Naive thymus-derived CD4-positive, alpha-beta T cell (primary cell): ENCODE measurements at regions of chr12 and their contacts with region 1.

Region 1: DNA sequence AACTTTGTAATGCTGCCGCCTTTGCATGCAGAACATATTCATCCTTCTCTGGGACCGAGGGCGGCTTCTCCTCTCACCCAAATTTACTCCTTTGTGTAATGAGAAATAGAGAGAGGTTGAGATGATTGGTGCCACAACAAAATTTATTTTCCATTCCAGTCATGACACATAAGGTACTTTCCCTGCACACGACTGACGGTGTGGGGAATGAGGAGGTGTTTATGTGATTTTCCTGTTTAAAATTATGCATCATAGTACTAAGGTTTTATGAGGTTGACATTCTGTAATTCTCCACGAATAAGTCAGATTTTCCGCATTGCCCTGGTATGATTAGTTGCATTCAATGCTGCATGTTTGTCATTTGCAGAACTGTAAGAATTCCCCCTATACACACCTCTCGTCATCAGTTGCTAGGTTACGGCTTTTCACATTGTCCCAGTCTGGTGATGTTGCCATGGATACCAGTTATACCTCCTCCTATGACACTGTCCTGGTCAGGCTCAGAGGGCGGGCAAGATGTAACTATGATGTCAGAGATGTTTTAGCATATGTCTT is 23.1 kb downstream of the BICDL1 start:
- DNase-seq: peak in 8 of 9 donors; percentile 31 to 98 (median 74)
- ATAC-seq: peak; percentile 78
- H3K4me3 ChIP-seq: peak overlapping the region; percentile 33
- H3K4me3 Mint-ChIP-seq: peak overlapping the region; percentile 8 to 86 (median 74)
- H3K27ac ChIP-seq: peak overlapping the region; percentile 93
- H3K27ac Mint-ChIP-seq: peak overlapping the region; percentile 93 to 100 (median 96)
- H3K4me1 ChIP-seq: peaks cover 73 to 79% of the 10 kb centered on the region in 2 donors
- H3K4me1 Mint-ChIP-seq: peaks cover 41 to 94% (median 82%) of the 10 kb centered on the region in 7 donors
- H3K27me3 ChIP-seq: no peaks in the 10 kb centered on the region
- H3K27me3 Mint-ChIP-seq: no peaks in the 10 kb centered on the region

Region 2: GRCh38 chr12:119835068-119835467 is 177.1 kb before region 1 on chr12:
- CTCF ChIA-PET with region 1: no interaction called
- POLR2A ChIA-PET with region 1: no interaction called
- intact Hi-C with region 1: no loop called
- DNase-seq: no peak
- ATAC-seq: no peak
- H3K4me3 ChIP-seq: no peak overlapping the region
- H3K4me3 Mint-ChIP-seq: no peak overlapping the region
- H3K27ac ChIP-seq: no peak overlapping the region
- H3K27ac Mint-ChIP-seq: no peak overlapping the region
- H3K4me1 ChIP-seq: no peaks in the 10 kb centered on the region
- H3K4me1 Mint-ChIP-seq: no peaks in the 10 kb centered on the region
- H3K27me3 ChIP-seq: no peaks in the 10 kb centered on the region
- H3K27me3 Mint-ChIP-seq: no peaks in the 10 kb centered on the region

Region 3: GRCh38 chr12:119902084-119902509 is 110.0 kb before region 1 on chr12:
- CTCF ChIA-PET with region 1: no interaction called
- POLR2A ChIA-PET with region 1: no interaction called
- intact Hi-C with region 1: loop called in 1 of 2 experiments (anchors 1 kb)
- DNase-seq: peak; percentile 19 to 69 (median 61)
- ATAC-seq: peak; percentile 98
- H3K4me3 ChIP-seq: no peak overlapping the region
- H3K4me3 Mint-ChIP-seq: no peak overlapping the region
- H3K27ac ChIP-seq: no peak overlapping the region
- H3K27ac Mint-ChIP-seq: no peak overlapping the region
- H3K4me1 ChIP-seq: no peaks in the 10 kb centered on the region
- H3K4me1 Mint-ChIP-seq: peaks cover 0 to 8% (median 6%) of the 10 kb centered on the region in 7 donors
- H3K27me3 ChIP-seq: no peaks in the 10 kb centered on the region
- H3K27me3 Mint-ChIP-seq: peaks cover 0 to 6% (median 0%) of the 10 kb centered on the region in 5 donors

Region 4: GRCh38 chr12:120041386-120042231 is 29.5 kb after region 1 on chr12:
- CTCF ChIA-PET with region 1: interaction called, 3 read pairs
- POLR2A ChIA-PET with region 1: no interaction called
- intact Hi-C with region 1: loop called in 1 of 2 experiments (anchors 2 kb)
- DNase-seq: peak in 7 of 9 donors; percentile 26 to 65 (median 61)
- ATAC-seq: peak; percentile 92
- H3K4me3 ChIP-seq: no peak overlapping the region
- H3K4me3 Mint-ChIP-seq: peak overlapping the region; percentile 7 to 85 (median 63)
- H3K27ac ChIP-seq: peak overlapping the region; percentile 57
- H3K27ac Mint-ChIP-seq: peak overlapping the region; percentile 21 to 96 (median 88)
- H3K4me1 ChIP-seq: no peaks in the 10 kb centered on the region
- H3K4me1 Mint-ChIP-seq: peaks cover 11 to 40% (median 22%) of the 10 kb centered on the region in 7 donors
- H3K27me3 ChIP-seq: no peaks in the 10 kb centered on the region
- H3K27me3 Mint-ChIP-seq: no peaks in the 10 kb centered on the region

Region 5: GRCh38 chr12:120116792-120117651 is 104.9 kb after region 1 on chr12:
- CTCF ChIA-PET with region 1: interaction called, 3 read pairs
- POLR2A ChIA-PET with region 1: interaction called, 4 read pairs
- intact Hi-C with region 1: loop called in 1 of 2 experiments (anchors 2 kb)
- DNase-seq: peak; percentile 95 to 100 (median 98)
- ATAC-seq: peak; percentile 91
- H3K4me3 ChIP-seq: peak overlapping the region; percentile 82
- H3K4me3 Mint-ChIP-seq: peak overlapping the region; percentile 78 to 95 (median 90)
- H3K27ac ChIP-seq: peak overlapping the region; percentile 84
- H3K27ac Mint-ChIP-seq: peak overlapping the region; percentile 80 to 97 (median 90)
- H3K4me1 ChIP-seq: peaks cover 46 to 48% of the 10 kb centered on the region in 2 donors
- H3K4me1 Mint-ChIP-seq: peaks cover 64 to 86% (median 80%) of the 10 kb centered on the region in 7 donors
- H3K27me3 ChIP-seq: no peaks in the 10 kb centered on the region
- H3K27me3 Mint-ChIP-seq: no peaks in the 10 kb centered on the region